ENCODE measurements at regions of chr6 and their contacts with region 1.

Region 1: DNA sequence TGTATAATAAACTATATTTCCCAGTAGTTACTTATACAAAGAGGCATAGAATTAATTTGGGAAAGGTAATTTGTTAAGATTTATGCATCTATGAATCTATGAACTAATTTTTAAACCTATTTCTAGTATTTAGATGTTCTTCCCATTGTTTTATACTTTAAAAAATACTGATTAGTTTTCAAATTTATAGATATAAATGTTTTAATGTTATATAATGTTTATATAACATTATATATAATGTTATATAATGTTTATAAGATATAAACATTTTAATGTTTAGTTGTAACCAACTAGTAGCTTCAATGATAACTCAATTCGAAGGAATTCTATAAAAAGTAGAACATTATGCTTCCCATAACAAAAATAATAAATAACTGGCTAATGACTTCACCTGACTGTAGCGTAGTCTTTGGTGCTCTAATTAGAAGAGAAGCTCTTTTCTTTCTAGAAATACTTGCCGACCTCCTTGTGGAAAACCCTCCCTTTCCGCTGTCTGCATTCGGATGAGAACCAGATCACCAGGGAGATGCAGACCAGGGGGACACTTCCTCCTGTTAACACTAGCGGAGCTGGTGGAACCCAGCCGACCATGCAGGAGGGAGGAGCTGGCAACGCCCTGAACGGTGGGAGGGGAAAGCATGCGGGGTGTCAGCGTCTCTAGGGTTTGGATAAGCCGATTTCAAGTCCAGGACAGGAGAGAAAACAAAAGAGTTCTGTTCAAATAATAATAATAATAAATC is 158.4 kb downstream of the OR2B2 start:
- DNase-seq: peak; percentile 37
- H3K4me3 ChIP-seq: peak overlapping the region; percentile 31 to 61 (median 38)
- H3K27ac ChIP-seq: no peak overlapping the region
- H3K4me1 ChIP-seq: peaks cover 5% of the 10 kb centered on the region
- H3K27me3 ChIP-seq: peaks cover 35 to 36% of the 10 kb centered on the region in 2 experiments
- CTCF ChIP-seq: no peak
- POLR2A ChIP-seq: no peak

Region 2: GRCh38 chr6:27177485-27178406 is 576.1 kb before region 1 on chr6:
- CTCF ChIA-PET with region 1: interaction called, 17 read pairs
- POLR2A ChIA-PET with region 1: no interaction called
- dilution Hi-C with region 1: no loop called
- intact Hi-C with region 1: loop called (anchors 2 kb)
- DNase-seq: peak; percentile 88
- H3K4me3 ChIP-seq: peak overlapping the region; percentile 34 to 94 (median 77)
- H3K27ac ChIP-seq: peak overlapping the region; percentile 41
- H3K4me1 ChIP-seq: no peaks in the 10 kb centered on the region
- H3K27me3 ChIP-seq: peaks cover 8 to 18% of the 10 kb centered on the region in 2 experiments
- CTCF ChIP-seq: peak; percentile 45 to 60
- POLR2A ChIP-seq: no peak

Region 3: GRCh38 chr6:27312146-27312949 is 441.5 kb before region 1 on chr6 and contains the start of gene POM121L2:
- CTCF ChIA-PET with region 1: interaction called, 12 read pairs
- POLR2A ChIA-PET with region 1: no interaction called
- dilution Hi-C with region 1: no loop called
- intact Hi-C with region 1: loop called (anchors 2 kb)
- DNase-seq: peak; percentile 65
- H3K4me3 ChIP-seq: peak within 1 kb of the TSS; percentile 41 to 60 (median 51)
- H3K27ac ChIP-seq: no peak within 1 kb of the TSS
- H3K4me1 ChIP-seq: peaks cover 9% of the 10 kb centered on the region
- H3K27me3 ChIP-seq: peaks cover 14 to 20% of the 10 kb centered on the region in 2 experiments
- CTCF ChIP-seq: peak; percentile 50 to 69
- POLR2A ChIP-seq: no peak
- total RNA-seq, gene POM121L2: not detected in 2 replicates

Region 4: DNA sequence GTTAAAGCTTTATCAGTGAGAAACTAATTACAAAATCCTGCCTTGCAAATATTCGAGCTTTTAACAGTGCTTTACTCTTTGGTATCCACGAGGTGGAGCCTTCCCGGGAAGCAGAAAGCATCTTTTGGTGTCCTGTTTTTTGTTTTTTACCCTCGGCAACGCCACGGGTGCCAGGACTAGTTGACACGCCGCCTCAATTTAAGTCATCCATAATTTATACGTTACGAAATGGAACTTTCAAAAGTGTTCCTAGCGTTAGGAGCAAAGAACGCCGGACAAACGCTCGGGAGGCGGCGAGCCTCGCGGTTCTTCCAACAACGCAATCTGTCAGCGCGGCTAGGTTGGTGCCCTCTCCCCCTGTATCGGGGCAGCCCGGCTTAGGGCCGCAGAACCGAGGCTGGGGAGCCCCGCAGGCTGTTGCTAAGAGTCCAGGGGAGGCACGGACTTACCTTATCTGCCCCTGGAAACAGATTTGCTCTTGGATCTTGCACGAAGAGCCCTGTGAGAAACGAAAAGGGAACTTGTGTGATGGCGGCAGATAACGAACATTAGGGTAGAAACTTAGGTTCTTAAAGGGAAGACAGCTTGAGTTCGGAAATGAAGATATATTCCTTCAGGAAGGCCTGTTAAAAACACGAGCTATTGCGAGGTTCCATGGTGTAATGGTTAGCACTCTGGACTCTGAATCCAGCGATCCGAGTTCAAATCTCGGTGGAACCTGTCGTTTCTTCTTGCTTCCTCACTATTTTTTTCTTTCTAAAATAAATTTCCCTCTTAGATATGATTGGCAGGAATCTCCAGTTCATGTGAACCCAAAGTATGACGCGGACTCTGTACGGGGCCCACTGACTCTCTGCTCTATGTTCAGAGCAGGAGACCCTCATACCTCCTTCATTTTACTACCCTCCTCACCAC is 234.7 kb before region 1 on chr6:
- CTCF ChIA-PET with region 1: interaction called, 90 read pairs
- POLR2A ChIA-PET with region 1: no interaction called
- dilution Hi-C with region 1: no loop called
- intact Hi-C with region 1: loop called (anchors 1 kb)
- DNase-seq: peak; percentile 93
- H3K4me3 ChIP-seq: peak overlapping the region; percentile 47 to 74 (median 61)
- H3K27ac ChIP-seq: peak overlapping the region; percentile 27
- H3K4me1 ChIP-seq: peaks cover 3% of the 10 kb centered on the region
- H3K27me3 ChIP-seq: peaks cover 19 to 30% of the 10 kb centered on the region in 2 experiments
- CTCF ChIP-seq: peak; percentile 57 to 63
- POLR2A ChIP-seq: no peak

Region 5: DNA sequence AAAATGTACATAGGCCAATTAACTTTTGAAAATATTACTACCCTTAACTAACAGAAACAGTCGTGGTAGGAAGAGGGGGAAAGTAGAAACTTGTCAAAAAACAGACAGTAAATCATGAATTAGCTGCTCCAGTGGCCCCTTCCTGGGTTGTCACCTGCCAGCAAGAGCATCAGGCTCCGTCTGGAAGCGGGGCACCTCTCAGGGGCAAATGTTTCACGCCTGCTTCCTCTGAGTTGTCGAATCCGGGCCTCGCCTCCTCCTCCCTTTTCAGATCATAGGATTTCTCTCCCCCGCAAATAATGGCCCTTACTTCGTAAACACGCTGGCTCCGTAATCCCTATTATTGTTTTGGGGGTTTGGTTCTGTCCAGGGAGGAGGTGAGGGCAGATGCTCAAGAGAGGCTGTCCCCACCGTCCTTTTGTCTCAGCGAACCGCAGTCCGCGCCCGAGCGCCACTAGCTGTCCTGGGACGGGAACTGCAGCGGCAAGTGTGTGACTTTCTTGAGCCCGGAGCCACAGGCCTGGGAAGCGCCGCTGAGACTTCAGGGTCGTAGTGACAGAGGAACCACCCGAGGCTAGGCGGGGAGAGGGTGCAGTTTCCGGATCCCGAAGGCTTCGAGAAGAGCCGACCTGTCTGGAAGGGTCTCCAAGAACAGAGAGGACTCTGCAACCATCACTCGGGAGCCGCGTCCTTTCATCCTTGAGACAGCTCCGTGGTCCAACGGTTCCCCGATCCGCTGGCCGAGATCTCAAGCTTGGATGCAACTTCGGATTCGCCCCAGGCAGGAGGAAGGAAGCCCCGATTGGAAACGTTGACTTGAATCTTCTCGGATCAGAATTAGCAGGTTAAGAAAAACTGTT is 66.5 kb before region 1 on chr6:
- CTCF ChIA-PET with region 1: interaction called, 13 read pairs
- POLR2A ChIA-PET with region 1: no interaction called
- dilution Hi-C with region 1: no loop called
- intact Hi-C with region 1: loop called (anchors 1 kb)
- DNase-seq: peak; percentile 75
- H3K4me3 ChIP-seq: peak overlapping the region; percentile 33 to 77 (median 62)
- H3K27ac ChIP-seq: no peak overlapping the region
- H3K4me1 ChIP-seq: peaks cover 3% of the 10 kb centered on the region
- H3K27me3 ChIP-seq: peaks cover 0 to 2% of the 10 kb centered on the region in 2 experiments
- CTCF ChIP-seq: peak; percentile 57 to 75
- POLR2A ChIP-seq: no peak

Region 6: DNA sequence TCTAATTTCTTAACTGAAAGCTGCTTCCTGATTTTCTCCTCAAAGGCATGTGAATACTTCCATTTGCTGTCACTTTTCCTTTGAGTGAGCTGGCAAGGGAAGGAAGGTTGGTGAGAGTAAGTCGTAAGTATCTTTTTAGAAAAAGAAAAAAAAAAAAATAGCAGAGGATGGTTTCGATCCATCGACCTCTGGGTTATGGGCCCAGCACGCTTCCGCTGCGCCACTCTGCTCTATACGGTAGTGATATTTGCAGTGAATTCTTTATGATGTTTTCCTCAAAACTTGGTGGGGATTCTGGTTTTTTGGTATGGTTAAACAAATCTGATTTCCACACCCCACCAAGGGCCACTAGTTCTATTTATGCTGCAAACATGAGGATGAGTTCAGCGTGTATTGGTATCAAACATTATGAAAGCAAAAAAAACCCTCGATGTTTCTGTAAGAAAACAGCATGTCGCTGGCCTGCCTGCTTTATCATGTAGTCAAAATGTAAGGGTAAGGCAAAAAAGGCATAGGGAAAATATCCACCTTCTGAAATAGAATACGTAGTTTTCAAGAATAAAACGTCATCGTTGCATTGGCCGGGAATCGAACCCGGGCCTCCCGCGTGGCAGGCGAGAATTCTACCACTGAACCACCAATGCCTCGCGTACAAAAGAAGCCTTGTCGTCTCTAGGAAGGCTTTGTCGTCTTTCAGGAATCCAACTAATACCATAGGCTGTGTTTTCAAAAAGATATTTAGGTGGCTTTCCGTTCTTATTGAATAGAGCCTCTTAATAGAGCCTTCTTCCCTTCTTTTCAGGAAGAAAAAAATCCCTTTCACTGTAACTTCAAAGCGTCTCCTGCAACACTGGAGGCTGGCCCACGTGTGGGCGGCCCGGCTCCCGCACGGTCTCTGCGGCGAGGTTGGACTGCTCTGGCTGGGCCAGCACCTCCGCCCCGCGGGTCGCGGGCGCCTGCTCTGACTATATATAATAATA is 148.8 kb after region 1 on chr6:
- CTCF ChIA-PET with region 1: interaction called, 8 read pairs
- POLR2A ChIA-PET with region 1: no interaction called
- dilution Hi-C with region 1: no loop called
- intact Hi-C with region 1: loop called (anchors 1 kb)
- DNase-seq: peak; percentile 92
- H3K4me3 ChIP-seq: peak overlapping the region; percentile 39 to 91 (median 86)
- H3K27ac ChIP-seq: peak overlapping the region; percentile 37
- H3K4me1 ChIP-seq: no peaks in the 10 kb centered on the region
- H3K27me3 ChIP-seq: peaks cover 0 to 11% of the 10 kb centered on the region in 2 experiments
- CTCF ChIP-seq: no peak
- POLR2A ChIP-seq: no peak

Region 7: DNA sequence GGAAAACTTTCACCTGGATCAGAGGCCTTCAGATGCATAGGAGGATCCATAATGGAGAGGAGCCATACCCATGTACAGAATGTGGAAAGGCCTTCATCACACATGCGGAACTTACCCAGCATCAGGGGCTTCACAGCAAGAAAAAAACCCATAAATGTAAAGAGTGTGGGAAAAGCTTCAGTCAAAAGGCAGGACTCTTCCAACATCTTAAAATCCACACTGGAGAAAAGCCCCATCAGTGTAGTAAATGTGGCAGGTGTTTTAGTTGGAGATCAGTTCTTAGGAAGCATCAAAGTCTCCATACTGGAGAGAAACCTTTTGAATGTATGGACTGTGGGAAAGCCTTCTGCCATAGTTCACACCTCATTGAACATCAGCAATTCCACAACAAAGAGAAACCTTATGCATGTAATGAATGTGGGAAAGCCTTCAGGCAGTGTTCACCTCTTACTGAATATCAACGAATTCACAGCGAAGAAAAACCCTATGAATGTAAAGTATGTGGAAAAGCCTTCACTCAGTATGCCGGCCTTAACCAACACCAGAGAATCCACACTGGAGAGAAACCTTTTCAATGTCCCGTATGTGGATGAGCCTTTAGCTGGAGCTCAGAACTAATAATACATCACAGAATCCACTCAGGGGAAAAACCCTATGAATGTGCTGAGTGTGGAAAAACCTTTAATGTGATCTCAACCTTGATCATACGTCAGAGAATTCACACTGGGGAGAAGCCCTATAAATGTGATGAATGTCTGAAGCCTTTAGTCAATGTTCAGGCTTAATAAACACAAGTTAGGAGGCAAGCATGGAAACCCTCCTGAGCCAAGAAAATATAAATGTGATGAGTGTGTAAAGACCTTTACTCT is 434.5 kb after region 1 on chr6:
- CTCF ChIA-PET with region 1: no interaction called
- POLR2A ChIA-PET with region 1: no interaction called
- dilution Hi-C with region 1: no loop called
- intact Hi-C with region 1: no loop called
- DNase-seq: no peak
- H3K4me3 ChIP-seq: no peak overlapping the region
- H3K27ac ChIP-seq: no peak overlapping the region
- H3K4me1 ChIP-seq: no peaks in the 10 kb centered on the region
- H3K27me3 ChIP-seq: no peaks in the 10 kb centered on the region
- CTCF ChIP-seq: no peak
- POLR2A ChIP-seq: no peak

Region 8: GRCh38 chr6:28225056-28225834 is 471.4 kb after region 1 on chr6 and contains the start of gene ZSCAN9:
- CTCF ChIA-PET with region 1: no interaction called
- POLR2A ChIA-PET with region 1: no interaction called
- dilution Hi-C with region 1: no loop called
- intact Hi-C with region 1: no loop called
- DNase-seq: peak; percentile 89
- H3K4me3 ChIP-seq: peak within 1 kb of the TSS; percentile 48 to 99 (median 86)
- H3K27ac ChIP-seq: peak within 1 kb of the TSS; percentile 77
- H3K4me1 ChIP-seq: peaks cover 10% of the 10 kb centered on the region
- H3K27me3 ChIP-seq: no peaks in the 10 kb centered on the region
- CTCF ChIP-seq: no peak
- POLR2A ChIP-seq: peak; percentile 82
- total RNA-seq, gene ZSCAN9: 18.0 and 18.6 TPM in 2 replicates

Measured in endothelial cell of umbilical vein (primary cell).